Cardiac septum (tissue), 1 donor: ENCODE measurements at regions of chr6 and their contacts with region 1.

Region 1: GRCh38 chr6:17917837-17918763 is 69.3 kb downstream of the KIF13A start:
- DNase-seq: no peak

Region 2: GRCh38 chr6:17706580-17707370 is 211.3 kb before region 1 on chr6 and contains the start of gene NUP153:
- intact Hi-C with region 1: no loop called
- DNase-seq: peak; percentile 100
- total RNA-seq, gene NUP153: 25.8 TPM

Region 3: GRCh38 chr6:17865798-17866725 is 52.0 kb before region 1 on chr6:
- intact Hi-C with region 1: loop called (anchors 5 kb)
- DNase-seq: peak; percentile 85

Region 4: DNA sequence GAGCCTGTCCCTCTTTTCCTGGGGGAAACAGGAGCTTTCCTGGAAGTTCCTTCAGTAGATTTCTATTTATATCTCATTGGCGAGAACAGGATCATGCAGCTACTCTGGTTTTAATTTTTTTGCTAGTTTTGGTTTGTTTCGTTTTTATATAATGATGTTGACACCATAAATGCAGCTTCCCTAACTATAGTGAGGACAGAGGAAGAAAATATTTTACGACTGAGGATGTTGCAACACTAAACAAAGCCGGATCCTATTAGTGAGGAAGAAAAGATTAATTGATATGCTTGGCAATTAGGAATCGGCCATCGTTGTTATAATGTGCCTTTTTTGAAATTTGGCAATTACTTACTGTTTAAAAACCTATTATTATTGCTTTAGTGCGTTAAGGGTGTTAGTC is 253.8 kb after region 1 on chr6:
- intact Hi-C with region 1: no loop called
- DNase-seq: no peak